ENCODE measurements at regions of chr2 and their contacts with region 1.

Region 1: DNA sequence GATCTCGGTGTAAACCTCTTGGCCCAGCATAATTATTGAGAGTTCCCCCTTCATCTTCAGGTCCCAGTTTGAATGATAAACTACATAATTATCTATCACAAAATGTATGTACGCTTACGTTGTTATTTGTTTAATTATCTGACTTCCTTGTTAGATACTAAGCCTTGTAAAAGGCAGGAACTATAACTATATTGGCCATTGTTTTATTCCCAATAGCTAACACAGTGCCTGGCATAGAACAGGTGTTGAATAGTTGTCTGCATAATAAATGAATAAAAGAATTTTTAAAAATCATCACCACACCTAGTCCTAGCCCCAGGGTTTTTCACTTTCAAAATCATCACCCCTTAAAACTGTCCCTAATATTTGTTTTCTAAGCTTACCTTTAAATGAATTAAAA is 207.9 kb downstream of the MREG start:
- DNase-seq: no peak
- CTCF ChIP-seq: no peak

Region 2: DNA sequence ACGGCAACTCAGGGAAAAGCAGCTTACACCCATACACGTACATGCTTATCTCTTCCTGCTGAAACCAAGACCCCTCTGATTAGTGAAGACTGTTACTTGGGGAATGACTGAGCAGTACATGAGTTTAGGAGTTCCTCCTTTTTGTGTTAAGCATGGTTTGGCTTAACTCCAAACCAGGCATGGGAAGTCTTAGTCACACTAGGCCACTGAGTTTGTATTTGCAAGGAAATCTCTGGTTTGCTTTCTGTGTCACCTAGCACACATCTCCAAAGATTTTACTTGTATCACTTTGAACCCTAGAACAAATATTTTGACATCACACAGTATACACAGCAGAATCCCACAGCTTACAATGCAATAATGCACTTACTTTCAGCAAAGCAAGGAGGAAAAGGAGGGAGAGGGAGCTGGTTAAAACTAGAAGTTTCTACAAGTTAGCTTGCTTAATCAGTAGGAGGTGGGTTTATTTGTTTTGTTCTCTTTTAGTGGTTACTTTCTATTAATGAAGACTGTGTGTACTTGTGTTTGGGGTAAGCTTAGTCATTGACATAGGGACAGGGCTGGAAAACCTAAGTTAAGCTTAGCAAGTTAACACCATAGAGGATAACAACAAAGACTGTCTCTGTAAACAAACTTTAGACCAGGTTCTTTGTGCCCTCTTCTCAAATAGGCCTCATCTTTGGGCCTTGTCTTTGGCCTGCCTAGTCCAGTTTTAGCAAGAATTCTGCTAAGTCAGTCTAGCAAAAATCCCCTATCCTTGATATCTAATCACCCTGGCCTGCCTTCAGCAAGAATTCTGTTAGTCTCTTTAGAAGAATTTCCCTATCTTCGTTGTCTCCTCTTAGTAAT is 11.5 kb before region 1 on chr2:
- CTCF ChIA-PET with region 1: interaction called, 13 read pairs
- POLR2A ChIA-PET with region 1: interaction called, 4 read pairs
- DNase-seq: no peak
- CTCF ChIP-seq: no peak

Measured in GM10248 (cell line).